Activated B cell treated with CpG ODN at 0.5 μM for 24 hours (primary cell): ENCODE measurements at regions of chr1 and their contacts with region 1.

Region 1: DNA sequence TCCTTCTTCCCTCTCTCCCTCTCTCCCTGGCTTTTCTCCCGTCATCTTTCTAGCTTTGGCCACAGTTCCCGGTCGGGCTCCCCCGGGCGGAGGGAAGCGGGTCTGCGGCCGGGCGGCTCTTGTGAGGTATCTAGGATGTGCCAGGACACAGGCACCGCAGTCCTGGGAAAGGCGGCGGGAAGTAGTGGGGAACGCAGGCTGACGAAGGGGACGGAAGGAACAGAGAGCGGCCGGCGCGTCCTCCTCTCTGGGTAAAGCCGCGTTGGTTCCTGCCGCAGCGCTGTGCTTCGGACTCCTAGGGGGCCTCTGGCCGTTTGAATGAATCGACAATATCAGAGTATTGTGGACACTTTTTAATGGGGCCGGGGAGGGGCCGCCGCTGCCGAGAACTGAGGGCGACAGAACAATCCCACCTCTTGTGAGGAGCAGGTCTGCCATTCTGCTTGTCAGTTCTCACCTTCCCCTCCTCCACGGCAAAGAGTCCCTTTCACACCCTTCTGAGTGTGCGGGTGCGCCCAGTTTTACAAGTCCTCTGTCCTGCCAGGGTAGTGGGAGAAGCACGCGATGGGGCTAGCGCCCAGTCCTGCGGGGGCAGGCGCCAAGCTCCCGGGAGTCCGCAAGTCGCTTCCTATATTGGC is 1.2 kb upstream of the LHX9 start:
- DNase-seq: no peak
- ATAC-seq: peak; percentile 12
- H3K4me3 Mint-ChIP-seq: peak overlapping the region; percentile 65
- H3K27ac Mint-ChIP-seq: no peak overlapping the region
- H3K4me1 Mint-ChIP-seq: peaks cover 83% of the 10 kb centered on the region
- H3K27me3 Mint-ChIP-seq: peaks cover 84% of the 10 kb centered on the region
- CTCF ChIP-seq: no peak

Region 2: DNA sequence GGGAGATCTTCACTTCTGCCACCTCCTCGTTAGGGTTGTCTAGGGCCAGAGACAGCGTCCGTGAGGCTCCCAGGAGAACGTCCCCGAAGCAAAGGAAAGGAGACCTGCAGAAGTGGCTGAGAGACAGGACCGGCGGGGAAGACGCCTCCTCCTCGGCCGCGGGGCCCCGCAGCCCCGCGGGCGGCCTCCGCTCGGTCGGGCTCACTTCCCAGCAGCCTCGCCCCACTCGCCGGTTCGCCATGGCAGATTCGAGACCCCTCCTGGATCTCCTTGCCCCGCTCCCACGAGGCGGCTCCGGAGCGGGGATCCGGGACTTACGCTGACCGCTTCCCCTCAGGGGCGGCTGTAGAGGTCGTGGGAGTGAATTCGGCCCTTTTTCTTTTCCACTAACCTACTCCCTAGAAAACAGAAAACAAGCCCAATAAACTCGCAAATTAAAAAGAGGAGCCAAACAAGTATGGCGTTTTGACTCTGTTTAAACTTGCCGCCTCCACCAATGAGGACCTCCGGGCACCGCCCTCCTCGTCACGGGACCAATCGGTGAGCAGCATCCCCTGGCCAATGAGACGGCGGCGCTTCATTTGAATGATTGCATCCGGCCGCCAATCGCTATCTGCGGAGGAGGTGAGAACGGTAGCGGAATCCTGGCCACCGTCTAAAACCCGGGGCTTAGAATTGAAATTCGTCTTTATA is 769.6 kb before region 1 on chr1 and contains the start of gene ASPM:
- CTCF ChIA-PET with region 1: no interaction called
- POLR2A ChIA-PET with region 1: no interaction called
- intact Hi-C with region 1: loop called (anchors 10 kb)
- DNase-seq: peak; percentile 86
- ATAC-seq: peak; percentile 100
- H3K4me3 Mint-ChIP-seq: peak within 1 kb of the TSS; percentile 94
- H3K27ac Mint-ChIP-seq: peak within 1 kb of the TSS; percentile 90
- H3K4me1 Mint-ChIP-seq: peaks cover 29% of the 10 kb centered on the region
- H3K27me3 Mint-ChIP-seq: no peaks in the 10 kb centered on the region
- CTCF ChIP-seq: no peak
- total RNA-seq, gene ASPM: 0.46 and 0.69 TPM in 2 replicates

Region 3: DNA sequence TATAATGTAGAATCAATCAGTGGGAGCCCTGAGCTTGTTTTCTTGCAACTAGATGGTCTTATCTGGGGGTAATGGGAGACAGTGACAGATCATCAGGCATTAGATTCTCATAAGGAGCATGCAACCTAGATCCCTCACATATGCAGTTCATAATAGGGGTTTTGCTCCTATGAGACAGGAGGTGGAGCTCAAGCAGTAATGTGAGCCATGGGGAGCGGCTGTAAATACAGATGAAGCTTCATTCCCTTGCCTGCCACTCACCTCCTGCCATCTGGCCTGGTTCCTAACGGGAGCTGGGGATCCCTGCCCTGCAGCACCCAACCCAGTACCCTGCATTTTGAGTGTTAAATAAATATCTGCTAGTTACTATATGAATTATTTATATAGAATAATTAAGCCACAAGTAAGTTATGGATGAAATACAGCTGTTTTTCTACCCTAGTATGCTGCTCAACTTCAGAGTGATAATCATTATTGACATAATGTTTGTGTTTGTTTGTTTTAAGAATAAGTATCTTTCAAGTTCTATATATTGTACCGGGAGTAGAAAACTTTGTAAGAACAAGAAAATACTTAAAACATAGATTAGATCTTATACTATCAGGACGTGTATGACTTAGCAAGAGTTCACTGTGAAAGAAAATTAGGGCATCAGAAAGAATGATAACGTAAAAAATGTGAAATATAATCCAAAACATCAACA is 328.0 kb before region 1 on chr1:
- CTCF ChIA-PET with region 1: no interaction called
- POLR2A ChIA-PET with region 1: no interaction called
- intact Hi-C with region 1: no loop called
- DNase-seq: no peak
- ATAC-seq: no peak
- H3K4me3 Mint-ChIP-seq: no peak overlapping the region
- H3K27ac Mint-ChIP-seq: no peak overlapping the region
- H3K4me1 Mint-ChIP-seq: no peaks in the 10 kb centered on the region
- H3K27me3 Mint-ChIP-seq: no peaks in the 10 kb centered on the region
- CTCF ChIP-seq: no peak

Region 4: DNA sequence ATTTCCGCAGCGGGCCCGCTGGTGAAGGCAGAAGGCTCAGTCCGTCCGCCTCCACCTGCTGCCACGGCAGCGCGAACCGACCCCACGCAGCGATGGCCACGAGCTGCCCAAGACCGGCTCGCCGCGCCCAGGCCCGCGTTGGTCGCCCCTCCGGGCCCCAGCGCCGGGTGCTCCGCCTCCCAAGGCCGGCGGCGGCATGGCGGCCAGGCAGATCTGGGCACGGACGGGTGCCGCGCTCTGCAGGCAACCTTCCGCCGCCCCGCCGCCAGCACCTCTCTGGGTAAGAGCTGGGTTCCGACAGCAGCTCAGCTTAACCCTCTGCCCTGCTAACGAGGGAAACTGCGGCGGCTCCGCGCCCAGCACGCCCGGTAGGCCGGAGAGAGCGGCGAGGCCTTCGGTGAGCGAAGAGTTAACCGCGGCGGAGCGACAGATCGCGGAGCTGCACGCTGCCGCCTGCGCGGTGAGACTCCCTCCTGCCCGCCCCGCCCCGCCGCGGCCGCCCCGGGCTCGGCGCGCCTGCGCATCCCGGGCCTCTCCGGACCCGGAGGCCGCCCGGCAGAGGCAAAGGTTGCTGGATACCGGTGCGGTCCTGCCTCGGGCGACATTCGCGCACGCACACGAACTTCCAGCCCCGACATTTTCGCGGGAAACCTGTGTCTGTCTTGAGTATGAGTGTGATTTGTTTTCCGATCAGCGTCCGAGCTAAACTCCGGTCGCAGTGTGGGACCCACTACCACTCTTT is 13.4 kb before region 1 on chr1 and contains the start of gene C1orf53:
- CTCF ChIA-PET with region 1: interaction called, 4 read pairs
- POLR2A ChIA-PET with region 1: interaction called, 7 read pairs
- intact Hi-C with region 1: loop called (anchors 1 kb)
- DNase-seq: peak; percentile 83
- ATAC-seq: peak; percentile 92
- H3K4me3 Mint-ChIP-seq: peak within 1 kb of the TSS; percentile 90
- H3K27ac Mint-ChIP-seq: peak within 1 kb of the TSS; percentile 67
- H3K4me1 Mint-ChIP-seq: peaks cover 14% of the 10 kb centered on the region
- H3K27me3 Mint-ChIP-seq: peaks cover 41% of the 10 kb centered on the region
- CTCF ChIP-seq: no peak
- total RNA-seq, gene C1orf53: 0.81 and 1.2 TPM in 2 replicates

Region 5: GRCh38 chr1:198007687-198008607 is 92.0 kb after region 1 on chr1:
- CTCF ChIA-PET with region 1: no interaction called
- POLR2A ChIA-PET with region 1: no interaction called
- intact Hi-C with region 1: no loop called
- DNase-seq: no peak
- ATAC-seq: no peak
- H3K4me3 Mint-ChIP-seq: no peak overlapping the region
- H3K27ac Mint-ChIP-seq: no peak overlapping the region
- H3K4me1 Mint-ChIP-seq: no peaks in the 10 kb centered on the region
- H3K27me3 Mint-ChIP-seq: peaks cover 6% of the 10 kb centered on the region
- CTCF ChIP-seq: no peak

Region 6: GRCh38 chr1:198157241-198157846 is 241.4 kb after region 1 on chr1:
- CTCF ChIA-PET with region 1: no interaction called
- POLR2A ChIA-PET with region 1: no interaction called
- intact Hi-C with region 1: no loop called
- DNase-seq: peak; percentile 73
- ATAC-seq: peak; percentile 50
- H3K4me3 Mint-ChIP-seq: peak overlapping the region; percentile 98
- H3K27ac Mint-ChIP-seq: peak overlapping the region; percentile 98
- H3K4me1 Mint-ChIP-seq: peaks cover 49% of the 10 kb centered on the region
- H3K27me3 Mint-ChIP-seq: no peaks in the 10 kb centered on the region
- CTCF ChIP-seq: no peak